IMR-90 (cell line): ENCODE measurements at regions of chr17 and their contacts with region 1.

Region 1: GRCh38 chr17:78959803-78960202 is 19.9 kb downstream of the LGALS3BP start:
- DNase-seq: no peak
- ATAC-seq: no peak
- H3K4me3 ChIP-seq: no peak overlapping the region
- H3K27ac ChIP-seq: no peak overlapping the region
- H3K4me1 ChIP-seq: peaks cover 7% of the 10 kb centered on the region
- H3K27me3 ChIP-seq: no peaks in the 10 kb centered on the region
- CTCF ChIP-seq: no peak
- POLR2A ChIP-seq: no peak
- RAD21 ChIP-seq: no peak

Region 2: DNA sequence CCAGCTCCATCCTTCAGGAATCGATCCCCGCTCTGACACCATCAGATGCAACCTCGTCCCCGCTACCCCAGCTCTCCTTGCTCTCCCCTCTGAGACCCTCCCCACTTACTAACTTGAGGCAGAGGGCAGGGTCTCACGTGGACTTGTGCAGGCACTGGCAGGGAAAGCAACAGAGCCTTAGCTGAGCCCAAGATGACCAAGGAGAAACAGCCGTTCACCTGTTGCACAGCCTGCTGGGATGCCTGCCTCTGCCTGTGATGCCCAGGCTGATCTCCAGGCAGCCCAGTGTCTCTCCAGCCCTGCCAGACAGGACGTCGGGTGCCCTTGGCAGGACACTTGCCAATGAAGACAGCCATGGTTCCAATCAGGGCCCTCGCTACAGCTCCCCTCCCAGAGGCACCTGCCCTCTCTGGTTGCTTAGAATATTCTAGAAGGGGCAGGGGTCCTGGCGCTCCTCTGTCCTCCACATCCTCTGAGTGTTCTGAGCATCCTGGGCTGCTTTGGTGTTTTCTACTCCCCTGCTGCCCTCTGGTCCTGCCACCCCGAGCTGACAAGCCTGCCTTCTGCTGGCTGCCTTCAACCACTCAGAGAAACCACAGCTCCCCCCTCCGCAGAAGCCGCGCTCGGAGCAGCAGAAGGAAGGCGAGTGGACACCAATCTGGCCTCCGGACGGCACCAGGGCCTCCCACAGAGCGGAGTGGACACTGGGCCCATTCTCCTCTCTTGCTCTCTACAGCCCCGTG is 63.5 kb before region 1 on chr17:
- CTCF ChIA-PET with region 1: interaction called, 4 read pairs
- POLR2A ChIA-PET with region 1: interaction called, 30 read pairs
- dilution Hi-C with region 1: no loop called
- in situ Hi-C with region 1: no loop called
- intact Hi-C with region 1: no loop called
- DNase-seq: no peak
- ATAC-seq: no peak
- H3K4me3 ChIP-seq: no peak overlapping the region
- H3K27ac ChIP-seq: no peak overlapping the region
- H3K4me1 ChIP-seq: peaks cover 26% of the 10 kb centered on the region
- H3K27me3 ChIP-seq: no peaks in the 10 kb centered on the region
- CTCF ChIP-seq: no peak
- POLR2A ChIP-seq: no peak
- RAD21 ChIP-seq: no peak